Uterus (tissue), 4 donors: ENCODE measurements at regions of chr3 and their contacts with region 1.

Region 1: GRCh38 chr3:124019291-124019690 is 27.4 kb upstream of the ROPN1 start:
- DNase-seq: no peak
- H3K4me3 ChIP-seq: no peak overlapping the region
- H3K27ac ChIP-seq: no peak overlapping the region
- H3K4me1 ChIP-seq: no peaks in the 10 kb centered on the region
- H3K27me3 ChIP-seq: no peaks in the 10 kb centered on the region
- CTCF ChIP-seq: no peak
- POLR2A ChIP-seq: no peak

Region 2: GRCh38 chr3:124078953-124079911 is 59.9 kb after region 1 on chr3:
- intact Hi-C with region 1: loop called (anchors 5 kb)
- DNase-seq: no peak
- H3K4me3 ChIP-seq: no peak overlapping the region
- H3K27ac ChIP-seq: peak overlapping the region; percentile 16 to 21
- H3K4me1 ChIP-seq: peaks cover 0 to 4% of the 10 kb centered on the region in 2 donors
- H3K27me3 ChIP-seq: no peaks in the 10 kb centered on the region
- CTCF ChIP-seq: peak; percentile 69 to 85 (median 82)
- POLR2A ChIP-seq: no peak

Region 3: GRCh38 chr3:124281453-124282316 is 262.4 kb after region 1 on chr3:
- intact Hi-C with region 1: loop called (anchors 5 kb)
- DNase-seq: no peak
- H3K4me3 ChIP-seq: no peak overlapping the region
- H3K27ac ChIP-seq: peak overlapping the region; percentile 81 to 83
- H3K4me1 ChIP-seq: peaks cover 7 to 25% of the 10 kb centered on the region in 2 donors
- H3K27me3 ChIP-seq: no peaks in the 10 kb centered on the region
- CTCF ChIP-seq: peak; percentile 52 to 80 (median 69)
- POLR2A ChIP-seq: no peak

Region 4: DNA sequence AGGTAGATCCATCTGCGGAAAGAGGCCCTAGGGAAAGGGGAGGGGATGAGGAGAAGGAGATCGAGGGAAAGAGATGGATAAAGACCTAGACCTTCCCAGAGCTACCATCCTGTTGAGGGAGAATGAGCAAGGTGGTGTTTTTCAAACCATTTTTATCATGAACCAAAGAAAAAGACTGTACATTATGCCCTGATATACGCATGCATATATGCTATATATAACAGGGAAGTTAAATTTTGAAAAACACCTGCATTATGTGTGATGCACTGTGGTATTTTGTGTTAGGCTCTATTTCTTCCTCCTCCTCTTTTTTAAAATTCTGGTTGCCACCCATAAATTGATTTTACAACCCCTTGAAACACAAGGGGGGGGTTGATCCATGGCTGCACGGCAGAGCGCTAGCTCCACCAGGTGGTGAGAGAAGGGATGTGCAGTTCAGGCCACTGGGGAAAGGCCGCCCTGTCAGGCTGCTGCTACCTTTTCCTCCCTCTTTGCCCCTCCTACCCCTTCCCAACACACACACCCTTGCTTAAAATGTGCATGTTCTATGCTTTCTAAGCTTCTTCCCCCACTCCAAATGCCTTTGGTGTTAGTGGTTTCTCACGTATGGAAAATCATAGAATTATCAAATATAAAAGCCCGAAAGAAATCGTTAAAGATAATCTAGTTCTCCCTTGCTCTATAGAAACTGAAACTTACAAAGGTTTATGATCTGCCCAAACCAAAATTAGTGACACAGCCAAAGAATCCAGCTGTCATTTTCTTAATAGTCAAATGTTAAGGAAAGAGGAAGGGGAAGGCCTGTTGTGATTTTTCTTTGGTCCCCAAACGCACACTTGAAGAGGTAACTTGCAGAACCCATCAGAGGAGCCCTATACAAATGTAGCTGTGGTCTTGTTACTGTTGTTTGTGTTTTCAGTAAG is 448.9 kb after region 1 on chr3:
- intact Hi-C with region 1: loop called (anchors 5 kb)
- DNase-seq: peak; percentile 31 to 54
- H3K4me3 ChIP-seq: no peak overlapping the region
- H3K27ac ChIP-seq: no peak overlapping the region
- H3K4me1 ChIP-seq: no peaks in the 10 kb centered on the region
- H3K27me3 ChIP-seq: no peaks in the 10 kb centered on the region
- CTCF ChIP-seq: peak; percentile 90 to 94 (median 91)
- POLR2A ChIP-seq: peak in 1 of 2 donors; percentile 18